Activated T-helper 1 cell treated with anti-CD3 and anti-CD28 coated beads, Interleukin-12 subunit alpha, Interleukin-12 subunit beta, Interleukin-2, Interleukin-4 antibody, amounts not matched to agents 30 ng/mL and 10 ng/mL and 1 ng/mL, durations not matched to agents 14 hours and 24 hours and 36 hours (primary cell): ENCODE measurements at regions of chr7 and their contacts with region 1.

Region 1: GRCh38 chr7:1940402-1940786 is 270.3 kb downstream of the ELFN1 start:
- DNase-seq: peak; percentile 90
- H3K4me3 Mint-ChIP-seq: peak overlapping the region; percentile 84
- H3K27ac Mint-ChIP-seq: peak overlapping the region; percentile 87
- H3K4me1 Mint-ChIP-seq: peaks cover 55% of the 10 kb centered on the region
- H3K27me3 Mint-ChIP-seq: peaks cover 2% of the 10 kb centered on the region

Region 2: GRCh38 chr7:1919539-1920265 is 20.7 kb before region 1 on chr7:
- intact Hi-C with region 1: loop called (anchors 1 kb)
- DNase-seq: no peak
- H3K4me3 Mint-ChIP-seq: peak overlapping the region; percentile 72
- H3K27ac Mint-ChIP-seq: no peak overlapping the region
- H3K4me1 Mint-ChIP-seq: peaks cover 42% of the 10 kb centered on the region
- H3K27me3 Mint-ChIP-seq: peaks cover 27% of the 10 kb centered on the region

Region 3: GRCh38 chr7:1961701-1962276 is 21.4 kb after region 1 on chr7:
- intact Hi-C with region 1: loop called (anchors 1 kb)
- DNase-seq: peak; percentile 29
- H3K4me3 Mint-ChIP-seq: no peak overlapping the region
- H3K27ac Mint-ChIP-seq: peak overlapping the region; percentile 87
- H3K4me1 Mint-ChIP-seq: peaks cover 14% of the 10 kb centered on the region
- H3K27me3 Mint-ChIP-seq: peaks cover 5% of the 10 kb centered on the region

Region 4: GRCh38 chr7:2037808-2038522 is 97.6 kb after region 1 on chr7:
- intact Hi-C with region 1: loop called (anchors 1 kb)
- DNase-seq: no peak
- H3K4me3 Mint-ChIP-seq: peak overlapping the region; percentile 83
- H3K27ac Mint-ChIP-seq: peak overlapping the region; percentile 24
- H3K4me1 Mint-ChIP-seq: peaks cover 42% of the 10 kb centered on the region
- H3K27me3 Mint-ChIP-seq: no peaks in the 10 kb centered on the region

Region 5: DNA sequence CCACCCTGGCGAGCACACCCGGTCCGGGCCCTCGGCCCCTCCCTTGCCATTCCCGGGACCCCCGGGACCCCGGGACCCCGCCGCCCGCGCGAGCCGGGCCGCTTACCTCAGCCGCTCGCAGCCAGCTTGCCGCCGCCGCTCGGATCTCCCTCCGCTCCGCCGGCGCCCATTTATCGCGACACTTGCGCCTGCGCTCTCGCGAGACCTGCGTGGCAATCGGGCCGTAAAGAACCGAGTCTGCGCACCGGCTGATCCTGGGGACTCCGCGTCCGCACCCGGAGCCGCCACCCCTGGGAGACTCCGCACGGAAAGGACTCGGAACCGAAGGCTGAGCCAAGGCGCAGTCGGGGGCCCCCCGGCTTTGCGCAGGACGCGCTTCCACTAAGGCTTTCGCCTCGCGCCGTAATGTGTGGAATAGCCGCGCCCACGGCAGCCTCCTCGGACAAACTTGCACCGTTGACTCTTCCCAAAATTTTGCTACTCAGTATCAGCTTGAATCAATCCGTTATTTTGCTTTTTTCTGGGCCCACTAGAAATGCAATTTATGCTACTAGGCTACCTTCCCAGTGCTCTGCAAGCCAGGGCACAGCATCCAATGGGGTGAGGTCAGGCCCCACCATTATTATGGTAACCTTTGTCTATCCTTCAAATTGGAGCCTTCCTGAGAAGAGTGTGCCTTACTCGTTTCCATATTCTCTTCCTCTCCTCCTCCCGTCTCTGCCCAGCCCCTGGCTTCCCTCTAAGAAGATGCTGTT is 292.5 kb after region 1 on chr7 and contains the start of gene MAD1L1:
- intact Hi-C with region 1: loop called (anchors 5 kb)
- DNase-seq: peak; percentile 88
- H3K4me3 Mint-ChIP-seq: peak within 1 kb of the TSS; percentile 96
- H3K27ac Mint-ChIP-seq: peak within 1 kb of the TSS; percentile 83
- H3K4me1 Mint-ChIP-seq: peaks cover 26% of the 10 kb centered on the region
- H3K27me3 Mint-ChIP-seq: no peaks in the 10 kb centered on the region
- total RNA-seq, gene MAD1L1: 56.2 and 56.4 TPM in 2 replicates